ENCODE measurements at regions of chr2 and their contacts with region 1.

Region 1: DNA sequence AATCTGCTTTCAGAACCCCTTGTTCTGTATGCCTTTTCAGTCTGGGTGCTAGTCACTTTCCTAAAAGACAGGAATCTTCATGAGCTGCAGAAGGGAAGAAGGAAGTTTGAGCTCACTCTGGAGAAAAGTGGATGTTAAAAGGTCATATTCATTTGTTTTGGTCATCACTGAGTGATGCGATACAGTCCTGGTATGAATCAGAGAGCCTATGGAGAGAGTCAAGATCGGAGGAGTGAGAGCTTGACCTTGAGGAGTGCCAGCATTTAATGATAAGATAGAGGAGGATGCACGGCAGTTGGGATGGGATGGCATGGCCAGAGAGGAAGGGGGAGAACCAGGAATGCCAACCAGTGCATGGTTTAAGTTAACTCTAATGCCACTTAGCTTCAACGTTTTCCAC is 19.6 kb downstream of the USP39 start:
- DNase-seq: no peak
- H3K4me3 ChIP-seq: no peak overlapping the region
- H3K27ac ChIP-seq: no peak overlapping the region
- H3K4me1 ChIP-seq: peaks cover 0 to 7% (median 0%) of the 10 kb centered on the region in 6 donors
- H3K27me3 ChIP-seq: no peaks in the 10 kb centered on the region
- CTCF ChIP-seq: no peak
- POLR2A ChIP-seq: no peak

Region 2: GRCh38 chr2:85707304-85707703 is 71.7 kb after region 1 on chr2:
- intact Hi-C with region 1: loop called (anchors 5 kb)
- DNase-seq: no peak
- H3K4me3 ChIP-seq: peak overlapping the region in 1 of 8 donors; percentile 4
- H3K27ac ChIP-seq: peak overlapping the region in 7 of 8 donors; percentile 59 to 91 (median 71)
- H3K4me1 ChIP-seq: peaks cover 12 to 98% (median 76%) of the 10 kb centered on the region in 6 donors
- H3K27me3 ChIP-seq: peaks cover 0 to 24% (median 0%) of the 10 kb centered on the region in 7 donors
- CTCF ChIP-seq: peak; percentile 72 to 93 (median 86)
- POLR2A ChIP-seq: no peak

Region 3: DNA sequence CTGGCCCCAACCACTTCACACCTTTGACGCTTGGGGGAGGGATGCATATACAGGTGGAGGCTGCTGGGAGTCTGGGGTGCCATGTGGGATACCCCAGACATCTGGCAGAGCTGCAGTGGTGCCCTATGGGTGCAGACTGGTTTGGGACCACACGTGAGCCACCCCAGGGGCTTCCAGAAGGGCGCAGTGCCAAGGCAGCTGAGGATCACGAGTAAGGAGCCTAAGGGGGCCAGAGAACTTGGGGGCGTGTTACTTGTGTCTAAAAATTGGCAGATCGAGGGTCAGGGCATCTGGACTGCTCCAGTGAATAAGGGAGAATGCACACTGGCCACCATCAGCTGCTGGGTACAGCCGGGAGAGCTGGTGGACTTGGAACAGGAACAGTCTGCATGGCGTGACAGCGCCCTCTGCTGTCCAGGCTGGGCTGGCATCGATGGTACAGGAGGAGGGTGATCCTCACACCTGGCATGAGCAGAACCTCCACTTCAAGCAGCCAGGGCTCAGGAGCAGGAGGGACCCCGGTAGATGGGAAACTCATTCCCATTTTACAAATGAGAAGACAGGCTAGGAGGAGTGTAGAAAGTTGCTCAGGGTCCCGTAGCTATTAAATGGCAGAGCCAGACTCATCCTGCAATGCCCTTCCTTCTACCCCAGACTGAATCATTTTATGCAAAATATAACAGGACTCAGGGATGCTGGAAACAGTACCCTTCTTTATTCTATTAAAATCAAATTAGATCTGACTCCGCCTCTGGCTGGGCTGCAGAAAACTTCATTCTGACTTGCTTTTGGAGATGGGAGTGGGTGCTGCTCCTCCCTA is 178.6 kb after region 1 on chr2:
- intact Hi-C with region 1: loop called (anchors 10 kb)
- DNase-seq: peak; percentile 95
- H3K4me3 ChIP-seq: no peak overlapping the region
- H3K27ac ChIP-seq: no peak overlapping the region
- H3K4me1 ChIP-seq: peaks cover 0 to 9% (median 2%) of the 10 kb centered on the region in 6 donors
- H3K27me3 ChIP-seq: peaks cover 0 to 25% (median 0%) of the 10 kb centered on the region in 7 donors
- CTCF ChIP-seq: peak; percentile 79 to 94 (median 91)
- POLR2A ChIP-seq: no peak

Measured in spleen (tissue), 13 donors.